ENCODE measurements at regions of chr3 and their contacts with region 1.

Region 1: DNA sequence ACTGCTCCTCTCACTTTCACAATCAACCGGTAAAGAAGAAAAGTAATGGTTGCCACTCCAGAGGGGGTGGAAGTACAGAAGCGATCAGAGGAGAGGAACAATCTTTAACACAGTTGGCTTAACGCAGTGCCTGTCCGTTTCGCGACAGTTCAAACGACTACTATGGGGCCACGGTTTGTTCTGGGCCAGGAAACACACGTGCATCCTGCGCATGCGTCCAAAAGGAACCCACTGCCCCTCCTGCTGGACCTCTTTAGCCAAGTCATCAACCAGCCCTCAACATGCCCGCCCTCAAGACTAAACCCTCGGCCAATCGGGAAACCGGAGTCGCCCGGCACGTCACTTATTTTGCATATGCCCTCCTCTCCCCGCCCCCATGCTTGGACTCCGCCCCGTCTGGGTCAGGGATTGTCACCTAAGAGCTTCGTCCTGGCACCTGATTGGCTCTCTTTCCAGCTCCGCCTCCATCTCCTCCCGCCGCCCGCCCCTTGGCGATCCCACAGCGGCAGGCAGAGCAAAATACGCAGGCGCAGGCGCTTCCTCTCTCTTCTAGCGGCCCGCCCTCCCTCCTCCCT is 345 bp upstream of the CDV3 start:
- DNase-seq: peak; percentile 100
- H3K4me3 ChIP-seq: peak overlapping the region in 2 of 3 experiments; percentile 87 to 89
- H3K27ac ChIP-seq: peak overlapping the region; percentile 95
- H3K4me1 ChIP-seq: peaks cover 49% of the 10 kb centered on the region
- H3K27me3 ChIP-seq: no peaks in the 10 kb centered on the region
- CTCF ChIP-seq: no peak

Region 2: DNA sequence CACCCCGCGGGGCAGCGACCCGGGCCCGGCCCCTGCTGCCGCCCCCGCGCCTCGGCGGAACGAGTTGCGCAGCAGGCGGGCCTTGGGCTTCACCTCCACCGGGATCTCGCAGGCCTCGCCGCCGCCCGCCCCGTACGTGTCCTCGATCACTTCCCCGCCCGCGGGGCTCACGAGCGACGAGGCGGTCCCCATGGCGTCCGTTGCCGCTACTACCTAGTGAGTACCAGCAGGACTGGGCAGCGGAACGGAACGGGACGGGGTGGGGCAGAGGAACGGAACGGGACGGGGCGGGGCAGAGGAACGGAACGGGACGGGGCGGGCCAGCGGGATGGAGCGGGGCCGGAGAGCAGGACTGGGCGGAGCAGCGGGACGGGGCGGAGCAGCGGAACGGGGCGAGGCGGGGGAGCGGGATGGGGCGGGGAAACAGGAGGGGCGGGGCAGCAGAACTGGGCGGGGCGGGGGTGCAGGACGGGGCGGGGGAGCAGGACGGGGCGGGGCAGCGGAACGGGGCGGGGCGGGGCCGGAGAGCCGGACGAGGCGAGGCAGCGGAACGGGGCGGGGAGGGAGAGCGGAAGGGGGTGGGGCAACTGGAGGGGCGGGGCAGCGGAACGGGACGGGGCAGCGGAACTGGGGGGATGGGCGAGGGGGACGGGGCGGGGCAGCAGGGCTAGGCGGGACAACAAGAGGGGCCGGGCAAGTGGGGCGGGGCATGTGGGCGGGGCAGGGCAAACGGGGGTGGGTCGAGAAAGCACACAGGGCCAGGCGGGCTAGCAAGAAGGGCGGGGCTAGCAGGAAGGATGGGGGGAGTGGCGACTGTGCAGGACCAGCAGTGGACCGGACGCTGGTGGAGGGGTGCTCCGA is 850.7 kb before region 1 on chr3 and contains the start of gene NPHP3:
- CTCF ChIA-PET with region 1: no interaction called
- dilution Hi-C with region 1: no loop called
- in situ Hi-C with region 1: loop called in 1 of 2 experiments (anchors 25 kb)
- intact Hi-C with region 1: loop called (anchors 5 kb)
- DNase-seq: peak; percentile 92
- H3K4me3 ChIP-seq: peak within 1 kb of the TSS; percentile 80 to 96 (median 94)
- H3K27ac ChIP-seq: peak within 1 kb of the TSS; percentile 68
- H3K4me1 ChIP-seq: peaks cover 4% of the 10 kb centered on the region
- H3K27me3 ChIP-seq: no peaks in the 10 kb centered on the region
- CTCF ChIP-seq: no peak
- total RNA-seq, gene NPHP3: 22.8 to 24.5 TPM

Region 3: DNA sequence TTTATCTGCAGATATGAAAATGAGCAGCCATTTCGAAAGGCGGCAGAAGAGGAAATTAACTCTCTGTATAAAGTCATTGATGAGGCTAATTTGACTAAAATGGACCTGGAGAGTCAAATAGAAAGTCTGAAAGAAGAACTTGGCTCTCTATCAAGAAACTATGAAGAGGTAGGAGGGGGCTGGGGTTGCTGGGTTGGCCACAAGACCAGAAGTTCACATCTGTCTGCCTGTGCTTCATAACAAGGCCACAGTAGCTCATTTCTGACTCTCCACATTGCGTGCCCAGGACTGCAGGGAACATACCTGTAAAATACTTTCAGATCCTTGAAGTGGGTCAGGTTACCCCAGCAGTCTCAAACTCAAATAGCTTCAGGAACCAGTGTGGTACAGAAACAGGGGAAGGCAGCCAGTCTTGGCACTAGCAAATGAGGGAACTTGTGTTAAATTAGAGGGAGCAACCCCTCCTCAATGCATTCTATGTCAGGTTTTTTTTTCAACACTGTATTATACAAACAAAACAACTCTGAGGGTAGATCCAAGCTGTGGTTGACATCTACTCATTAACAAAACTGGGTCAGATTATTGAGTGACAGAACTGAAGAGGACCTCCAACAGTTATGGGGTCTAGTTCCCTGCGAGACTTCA is 124.5 kb before region 1 on chr3:
- CTCF ChIA-PET with region 1: no interaction called
- dilution Hi-C with region 1: no loop called
- in situ Hi-C with region 1: no loop called
- intact Hi-C with region 1: loop called (anchors 5 kb)
- DNase-seq: no peak
- H3K4me3 ChIP-seq: no peak overlapping the region
- H3K27ac ChIP-seq: no peak overlapping the region
- H3K4me1 ChIP-seq: peaks cover 11% of the 10 kb centered on the region
- H3K27me3 ChIP-seq: no peaks in the 10 kb centered on the region
- CTCF ChIP-seq: no peak

Region 4: GRCh38 chr3:133475245-133476010 is 97.7 kb before region 1 on chr3:
- CTCF ChIA-PET with region 1: interaction called, 3 read pairs
- dilution Hi-C with region 1: loop called (anchors 10 kb)
- in situ Hi-C with region 1: loop called in 1 of 2 experiments (anchors 10 kb)
- intact Hi-C with region 1: no loop called
- DNase-seq: no peak
- H3K4me3 ChIP-seq: no peak overlapping the region
- H3K27ac ChIP-seq: no peak overlapping the region
- H3K4me1 ChIP-seq: peaks cover 9% of the 10 kb centered on the region
- H3K27me3 ChIP-seq: no peaks in the 10 kb centered on the region
- CTCF ChIP-seq: no peak

Region 5: DNA sequence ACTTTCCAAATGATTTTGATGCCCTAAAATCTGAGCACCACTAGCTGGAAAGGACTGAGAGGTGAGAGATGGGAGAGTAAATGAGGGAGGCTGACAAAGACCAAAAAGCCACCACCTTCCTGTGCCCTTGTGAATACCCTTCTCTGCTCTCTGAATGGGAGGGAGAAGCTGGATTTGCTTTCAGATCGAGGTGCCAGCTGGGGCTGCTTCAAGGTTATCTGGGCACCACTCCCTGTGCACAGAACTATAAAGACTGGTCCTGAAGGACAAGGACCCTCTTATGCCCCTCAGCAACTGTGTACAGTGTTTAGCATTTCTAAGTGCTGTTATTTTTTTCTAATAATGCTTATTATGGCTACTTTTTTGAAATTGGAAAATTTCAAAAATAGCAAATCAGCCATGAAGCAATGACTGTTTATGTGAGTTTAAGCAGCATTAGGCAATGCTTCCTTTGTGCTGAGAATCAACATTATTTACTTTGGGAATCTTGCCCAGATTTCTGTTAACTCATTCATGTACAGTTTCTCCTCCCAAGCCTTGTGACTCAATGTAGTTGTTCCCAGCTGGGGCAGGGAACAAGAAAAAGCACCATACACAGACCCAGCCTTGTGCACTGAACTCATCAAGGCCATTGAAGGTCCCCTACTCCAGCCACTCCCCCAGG is 37.0 kb before region 1 on chr3:
- CTCF ChIA-PET with region 1: interaction called, 3 read pairs
- dilution Hi-C with region 1: no loop called
- in situ Hi-C with region 1: no loop called
- intact Hi-C with region 1: loop called (anchors 5 kb)
- DNase-seq: peak; percentile 85
- H3K4me3 ChIP-seq: no peak overlapping the region
- H3K27ac ChIP-seq: no peak overlapping the region
- H3K4me1 ChIP-seq: peaks cover 19% of the 10 kb centered on the region
- H3K27me3 ChIP-seq: no peaks in the 10 kb centered on the region
- CTCF ChIP-seq: no peak

Region 6: DNA sequence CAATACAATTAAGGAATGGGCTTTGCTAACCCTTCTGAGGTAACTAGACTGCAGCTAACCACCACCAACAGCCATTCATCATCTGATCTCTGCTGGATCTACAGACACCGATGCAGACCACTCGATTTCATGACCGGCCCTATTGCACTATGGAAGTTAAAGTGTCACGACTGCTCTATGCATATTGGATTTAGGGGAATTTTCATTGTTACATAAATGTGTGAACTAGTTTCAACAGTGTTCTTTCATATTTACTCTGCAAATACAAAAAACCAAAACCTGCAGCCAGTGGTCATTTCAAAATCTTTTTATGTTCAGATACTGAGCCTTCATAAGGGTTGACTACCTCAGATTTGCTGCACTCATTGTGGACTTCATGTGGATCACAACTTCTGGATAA is 14.9 kb after region 1 on chr3:
- CTCF ChIA-PET with region 1: no interaction called
- dilution Hi-C with region 1: no loop called
- in situ Hi-C with region 1: no loop called
- intact Hi-C with region 1: no loop called
- DNase-seq: no peak
- H3K4me3 ChIP-seq: no peak overlapping the region
- H3K27ac ChIP-seq: no peak overlapping the region
- H3K4me1 ChIP-seq: peaks cover 20% of the 10 kb centered on the region
- H3K27me3 ChIP-seq: no peaks in the 10 kb centered on the region
- CTCF ChIP-seq: no peak

Region 7: GRCh38 chr3:134485718-134486576 is 912.8 kb after region 1 on chr3 and contains the starts of genes ANAPC13 and CEP63:
- CTCF ChIA-PET with region 1: no interaction called
- dilution Hi-C with region 1: no loop called
- in situ Hi-C with region 1: no loop called
- intact Hi-C with region 1: loop called (anchors 10 kb)
- DNase-seq: peak; percentile 98
- H3K4me3 ChIP-seq: peak within 1 kb of the TSS; percentile 70 to 90 (median 76)
- H3K27ac ChIP-seq: peak within 1 kb of the TSS; percentile 87
- H3K4me1 ChIP-seq: peaks cover 38% of the 10 kb centered on the region
- H3K27me3 ChIP-seq: no peaks in the 10 kb centered on the region
- CTCF ChIP-seq: no peak
- total RNA-seq, gene ANAPC13: 32.2 to 40.5 TPM
- total RNA-seq, gene CEP63: 7.2 to 25.3 TPM